Ascending aorta (tissue), 2 donors: ENCODE measurements at regions of chr2 and their contacts with region 1.

Region 1: GRCh38 chr2:241149925-241150659 is at the start of gene PPP1R7:
- DNase-seq: peak; percentile 85 to 98
- H3K4me3 ChIP-seq: peak within 1 kb of the TSS; percentile 70 to 95
- H3K27ac ChIP-seq: peak within 1 kb of the TSS; percentile 62 to 87
- H3K4me1 ChIP-seq: peaks cover 0 to 15% of the 10 kb centered on the region in 2 donors
- H3K27me3 ChIP-seq: no peaks in the 10 kb centered on the region
- CTCF ChIP-seq: peak in 1 of 3 experiments; percentile 14
- total RNA-seq, gene PPP1R7: 4.2 TPM

Region 2: GRCh38 chr2:240560480-240561326 is 589.4 kb before region 1 on chr2:
- intact Hi-C with region 1: loop called (anchors 10 kb)
- DNase-seq: peak; percentile 96 to 100
- H3K4me3 ChIP-seq: peak overlapping the region; percentile 68 to 72
- H3K27ac ChIP-seq: peak overlapping the region; percentile 94 to 98
- H3K4me1 ChIP-seq: peaks cover 20 to 29% of the 10 kb centered on the region in 2 donors
- H3K27me3 ChIP-seq: no peaks in the 10 kb centered on the region
- CTCF ChIP-seq: peak; percentile 30 to 34 (median 34)

Region 3: GRCh38 chr2:240759454-240759853 is 390.6 kb before region 1 on chr2:
- intact Hi-C with region 1: no loop called
- DNase-seq: no peak
- H3K4me3 ChIP-seq: no peak overlapping the region
- H3K27ac ChIP-seq: no peak overlapping the region
- H3K4me1 ChIP-seq: no peaks in the 10 kb centered on the region
- H3K27me3 ChIP-seq: no peaks in the 10 kb centered on the region
- CTCF ChIP-seq: no peak

Region 4: GRCh38 chr2:240913810-240914644 is 236.1 kb before region 1 on chr2:
- intact Hi-C with region 1: loop called (anchors 2 kb)
- DNase-seq: peak; percentile 16 to 81
- H3K4me3 ChIP-seq: peak overlapping the region in 1 of 2 donors; percentile 20
- H3K27ac ChIP-seq: peak overlapping the region in 1 of 2 donors; percentile 18
- H3K4me1 ChIP-seq: peaks cover 13 to 17% of the 10 kb centered on the region in 2 donors
- H3K27me3 ChIP-seq: no peaks in the 10 kb centered on the region
- CTCF ChIP-seq: peak; percentile 70 to 92 (median 92)

Region 5: GRCh38 chr2:241102239-241102803 is 47.8 kb before region 1 on chr2 and contains the start of gene MTERF4:
- intact Hi-C with region 1: loop called (anchors 5 kb)
- DNase-seq: peak; percentile 52 to 91
- H3K4me3 ChIP-seq: peak within 1 kb of the TSS; percentile 80 to 85
- H3K27ac ChIP-seq: peak within 1 kb of the TSS; percentile 84 to 85
- H3K4me1 ChIP-seq: peaks cover 6 to 10% of the 10 kb centered on the region in 2 donors
- H3K27me3 ChIP-seq: no peaks in the 10 kb centered on the region
- CTCF ChIP-seq: no peak
- total RNA-seq, gene MTERF4: 50.2 TPM

Region 6: GRCh38 chr2:241271641-241272297 is 121.7 kb after region 1 on chr2:
- intact Hi-C with region 1: loop called (anchors 5 kb)
- DNase-seq: peak; percentile 70 to 93
- H3K4me3 ChIP-seq: peak overlapping the region; percentile 98 to 100
- H3K27ac ChIP-seq: peak overlapping the region; percentile 95 to 98
- H3K4me1 ChIP-seq: peaks cover 14 to 28% of the 10 kb centered on the region in 2 donors
- H3K27me3 ChIP-seq: no peaks in the 10 kb centered on the region
- CTCF ChIP-seq: no peak

Region 7: GRCh38 chr2:241637000-241637791 is 487.1 kb after region 1 on chr2 and contains the starts of genes ATG4B and THAP4:
- intact Hi-C with region 1: loop called (anchors 1 kb)
- DNase-seq: peak; percentile 26 to 88
- H3K4me3 ChIP-seq: peak within 1 kb of the TSS; percentile 89 to 100
- H3K27ac ChIP-seq: peak within 1 kb of the TSS; percentile 99
- H3K4me1 ChIP-seq: peaks cover 17 to 29% of the 10 kb centered on the region in 2 donors
- H3K27me3 ChIP-seq: no peaks in the 10 kb centered on the region
- CTCF ChIP-seq: no peak
- total RNA-seq, gene ATG4B: 225 TPM
- total RNA-seq, gene THAP4: 80.8 TPM